IMR-90 (cell line): ENCODE measurements at regions of chr10 and their contacts with region 1.

Region 1: GRCh38 chr10:32795598-32796183 is 162.3 kb downstream of the ITGB1 start:
- DNase-seq: peak; percentile 32
- ATAC-seq: peak; percentile 60
- H3K4me3 ChIP-seq: no peak overlapping the region
- H3K27ac ChIP-seq: no peak overlapping the region
- H3K4me1 ChIP-seq: no peaks in the 10 kb centered on the region
- H3K27me3 ChIP-seq: no peaks in the 10 kb centered on the region
- CTCF ChIP-seq: peak; percentile 75
- POLR2A ChIP-seq: no peak
- RAD21 ChIP-seq: peak; percentile 90

Region 2: GRCh38 chr10:32445740-32446535 is 349.8 kb before region 1 on chr10 and contains the start of gene CCDC7:
- CTCF ChIA-PET with region 1: no interaction called
- POLR2A ChIA-PET with region 1: no interaction called
- dilution Hi-C with region 1: no loop called
- in situ Hi-C with region 1: no loop called
- intact Hi-C with region 1: loop called (anchors 2 kb)
- DNase-seq: peak; percentile 84
- ATAC-seq: peak; percentile 98
- H3K4me3 ChIP-seq: peak within 1 kb of the TSS; percentile 56
- H3K27ac ChIP-seq: peak within 1 kb of the TSS; percentile 87
- H3K4me1 ChIP-seq: no peaks in the 10 kb centered on the region; the same call in 1 of the 2 replicates
- H3K27me3 ChIP-seq: peaks cover 1% of the 10 kb centered on the region; the same call in 1 of the 2 replicates
- CTCF ChIP-seq: peak; percentile 68
- POLR2A ChIP-seq: peak; percentile 87
- RAD21 ChIP-seq: peak; percentile 48
- total RNA-seq, gene CCDC7: 3.9 and 4.3 TPM in 2 replicates

Region 3: GRCh38 chr10:32616438-32616837 is 179.3 kb before region 1 on chr10:
- CTCF ChIA-PET with region 1: no interaction called
- POLR2A ChIA-PET with region 1: no interaction called
- dilution Hi-C with region 1: no loop called
- in situ Hi-C with region 1: no loop called
- intact Hi-C with region 1: no loop called
- DNase-seq: no peak
- ATAC-seq: no peak
- H3K4me3 ChIP-seq: no peak overlapping the region
- H3K27ac ChIP-seq: no peak overlapping the region
- H3K4me1 ChIP-seq: no peaks in the 10 kb centered on the region
- H3K27me3 ChIP-seq: no peaks in the 10 kb centered on the region
- CTCF ChIP-seq: no peak
- POLR2A ChIP-seq: no peak
- RAD21 ChIP-seq: no peak

Region 4: GRCh38 chr10:32958085-32959005 is 162.7 kb after region 1 on chr10 and contains the start of gene ITGB1:
- CTCF ChIA-PET with region 1: no interaction called
- POLR2A ChIA-PET with region 1: no interaction called
- dilution Hi-C with region 1: no loop called
- in situ Hi-C with region 1: no loop called
- intact Hi-C with region 1: loop called (anchors 5 kb)
- DNase-seq: peak; percentile 95
- ATAC-seq: peak; percentile 88
- H3K4me3 ChIP-seq: peak within 1 kb of the TSS; percentile 100
- H3K27ac ChIP-seq: peak within 1 kb of the TSS; percentile 96
- H3K4me1 ChIP-seq: peaks cover 10% of the 10 kb centered on the region
- H3K27me3 ChIP-seq: no peaks in the 10 kb centered on the region
- CTCF ChIP-seq: no peak
- POLR2A ChIP-seq: peak; percentile 95
- RAD21 ChIP-seq: peak; percentile 14; the same call in 1 of the 2 replicates
- total RNA-seq, gene ITGB1: 1,331 and 2,388 TPM in 2 replicates

Region 5: GRCh38 chr10:33125522-33126517 is 330.1 kb after region 1 on chr10:
- CTCF ChIA-PET with region 1: no interaction called
- POLR2A ChIA-PET with region 1: no interaction called
- dilution Hi-C with region 1: no loop called
- in situ Hi-C with region 1: no loop called
- intact Hi-C with region 1: loop called (anchors 10 kb)
- DNase-seq: peak; percentile 64
- ATAC-seq: no peak
- H3K4me3 ChIP-seq: no peak overlapping the region
- H3K27ac ChIP-seq: peak overlapping the region; percentile 44; the same call in 1 of the 2 replicates
- H3K4me1 ChIP-seq: peaks cover 29% of the 10 kb centered on the region
- H3K27me3 ChIP-seq: no peaks in the 10 kb centered on the region
- CTCF ChIP-seq: no peak
- POLR2A ChIP-seq: no peak
- RAD21 ChIP-seq: no peak

Region 6: GRCh38 chr10:33155720-33156638 is 360.3 kb after region 1 on chr10:
- CTCF ChIA-PET with region 1: no interaction called
- POLR2A ChIA-PET with region 1: no interaction called
- dilution Hi-C with region 1: no loop called
- in situ Hi-C with region 1: no loop called
- intact Hi-C with region 1: loop called (anchors 10 kb)
- DNase-seq: peak; percentile 91
- ATAC-seq: peak; percentile 97
- H3K4me3 ChIP-seq: no peak overlapping the region
- H3K27ac ChIP-seq: peak overlapping the region; percentile 51
- H3K4me1 ChIP-seq: peaks cover 9% of the 10 kb centered on the region
- H3K27me3 ChIP-seq: no peaks in the 10 kb centered on the region
- CTCF ChIP-seq: peak; percentile 90
- POLR2A ChIP-seq: no peak
- RAD21 ChIP-seq: peak; percentile 86

Region 7: DNA sequence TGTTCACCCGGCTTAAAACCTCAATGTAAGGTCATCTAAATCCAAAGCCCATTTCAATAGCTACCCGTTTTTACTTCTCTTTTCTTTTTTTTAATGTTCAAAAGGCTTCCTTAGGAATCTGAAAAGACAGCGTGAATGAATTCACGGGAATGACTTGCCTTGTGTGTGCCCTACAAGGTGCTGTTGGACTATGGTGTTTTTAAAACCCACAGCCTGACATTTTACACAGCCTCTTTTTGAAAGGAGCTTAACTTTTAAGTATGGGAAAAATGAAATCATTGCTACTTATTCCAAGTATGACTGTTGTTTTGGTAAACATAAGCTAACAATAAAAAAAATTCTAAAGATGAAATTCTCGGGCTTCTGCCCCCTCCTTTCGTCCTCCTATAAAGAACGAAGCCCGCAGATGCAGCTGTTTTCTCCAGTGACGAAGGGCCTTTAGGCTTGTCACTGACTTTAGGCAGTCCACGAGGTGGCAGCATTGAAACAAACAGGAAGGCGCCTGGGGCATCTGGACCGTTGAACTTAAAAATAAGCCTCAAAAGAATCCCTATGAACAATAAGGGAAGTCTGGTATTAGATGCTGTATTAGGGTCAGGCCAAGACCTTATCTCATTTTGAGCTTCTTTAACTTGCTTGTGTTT is 397.5 kb after region 1 on chr10:
- CTCF ChIA-PET with region 1: no interaction called
- POLR2A ChIA-PET with region 1: no interaction called
- dilution Hi-C with region 1: no loop called
- in situ Hi-C with region 1: no loop called
- intact Hi-C with region 1: loop called (anchors 10 kb)
- DNase-seq: peak; percentile 87
- ATAC-seq: peak; percentile 81
- H3K4me3 ChIP-seq: no peak overlapping the region
- H3K27ac ChIP-seq: no peak overlapping the region
- H3K4me1 ChIP-seq: peaks cover 18% of the 10 kb centered on the region
- H3K27me3 ChIP-seq: no peaks in the 10 kb centered on the region
- CTCF ChIP-seq: peak; percentile 77
- POLR2A ChIP-seq: no peak
- RAD21 ChIP-seq: peak; percentile 84

Region 8: GRCh38 chr10:33321513-33321912 is 525.8 kb after region 1 on chr10:
- CTCF ChIA-PET with region 1: no interaction called
- POLR2A ChIA-PET with region 1: no interaction called
- dilution Hi-C with region 1: no loop called
- in situ Hi-C with region 1: no loop called
- intact Hi-C with region 1: no loop called
- DNase-seq: no peak
- ATAC-seq: no peak
- H3K4me3 ChIP-seq: no peak overlapping the region
- H3K27ac ChIP-seq: no peak overlapping the region
- H3K4me1 ChIP-seq: peaks cover 8% of the 10 kb centered on the region
- H3K27me3 ChIP-seq: no peaks in the 10 kb centered on the region
- CTCF ChIP-seq: no peak
- POLR2A ChIP-seq: no peak
- RAD21 ChIP-seq: no peak